Psoas muscle (tissue), 8 donors: ENCODE measurements at regions of chr6 and their contacts with region 1.

Region 1: GRCh38 chr6:21594439-21595281 is 1.1 kb downstream of the SOX4 start:
- DNase-seq: peak; percentile 56 to 73
- ATAC-seq: peak; percentile 47 to 59 (median 52)
- H3K4me3 ChIP-seq: peak overlapping the region; percentile 88
- H3K27ac ChIP-seq: peak overlapping the region; percentile 84
- H3K4me1 ChIP-seq: peaks cover 13% of the 10 kb centered on the region
- H3K27me3 ChIP-seq: no peaks in the 10 kb centered on the region
- CTCF ChIP-seq: no peak

Region 2: GRCh38 chr6:21694168-21694567 is 99.5 kb after region 1 on chr6:
- intact Hi-C with region 1: no loop called
- DNase-seq: no peak
- ATAC-seq: no peak
- H3K4me3 ChIP-seq: no peak overlapping the region
- H3K27ac ChIP-seq: no peak overlapping the region
- H3K4me1 ChIP-seq: no peaks in the 10 kb centered on the region
- H3K27me3 ChIP-seq: no peaks in the 10 kb centered on the region
- CTCF ChIP-seq: no peak

Region 3: GRCh38 chr6:22079783-22080182 is 485.1 kb after region 1 on chr6:
- intact Hi-C with region 1: no loop called
- DNase-seq: no peak
- ATAC-seq: no peak
- H3K4me3 ChIP-seq: no peak overlapping the region
- H3K27ac ChIP-seq: no peak overlapping the region
- H3K4me1 ChIP-seq: no peaks in the 10 kb centered on the region
- H3K27me3 ChIP-seq: no peaks in the 10 kb centered on the region
- CTCF ChIP-seq: no peak

Region 4: GRCh38 chr6:22738194-22738593 is 1143.5 kb after region 1 on chr6:
- intact Hi-C with region 1: loop called in 1 of 2 experiments (anchors 2 kb)
- DNase-seq: no peak
- ATAC-seq: no peak
- H3K4me3 ChIP-seq: no peak overlapping the region
- H3K27ac ChIP-seq: no peak overlapping the region
- H3K4me1 ChIP-seq: no peaks in the 10 kb centered on the region
- H3K27me3 ChIP-seq: no peaks in the 10 kb centered on the region
- CTCF ChIP-seq: no peak